ENCODE measurements at regions of chr1 and their contacts with region 1.

Region 1: GRCh38 chr1:10667861-10668761 is 128.3 kb downstream of the CASZ1 start:
- DNase-seq: peak; percentile 56
- ATAC-seq: peak; percentile 79
- H3K4me3 ChIP-seq: peak overlapping the region in 2 of 3 experiments; percentile 42 to 48; a peak in 3 of 6 replicates
- H3K27ac ChIP-seq: no peak overlapping the region
- H3K4me1 ChIP-seq: peaks cover 21% of the 10 kb centered on the region
- H3K27me3 ChIP-seq: no peaks in the 10 kb centered on the region
- CTCF ChIP-seq: no peak; the same call in none of the 2 replicates
- EP300 ChIP-seq: no peak
- POLR2A ChIP-seq: no peak
- RAD21 ChIP-seq: no peak; the same call in 1 of the 2 replicates

Region 2: DNA sequence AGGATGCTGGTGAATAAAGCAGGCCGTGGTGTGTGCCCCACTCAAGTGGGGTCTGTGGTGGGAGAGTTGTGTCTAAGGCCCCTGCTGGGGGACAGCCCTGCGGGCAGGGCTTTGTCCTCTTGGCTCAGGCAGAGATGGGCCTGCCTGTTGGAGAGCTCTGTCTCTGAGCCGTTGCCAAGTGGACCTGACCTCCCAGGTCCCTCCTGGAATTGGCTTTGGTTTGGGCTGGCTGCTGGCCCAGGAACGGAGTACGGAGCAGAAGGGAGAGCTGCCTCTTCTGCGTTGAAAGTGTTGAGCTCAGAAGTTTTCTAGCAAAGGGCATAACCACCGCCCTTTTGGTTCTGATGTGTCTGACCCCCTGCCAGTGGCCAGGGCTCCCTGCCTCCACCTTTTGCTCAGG is 39.4 kb before region 1 on chr1:
- CTCF ChIA-PET with region 1: no interaction called
- POLR2A ChIA-PET with region 1: no interaction called
- in situ Hi-C with region 1: no loop called
- intact Hi-C with region 1: no loop called
- DNase-seq: no peak
- ATAC-seq: no peak
- H3K4me3 ChIP-seq: no peak overlapping the region
- H3K27ac ChIP-seq: no peak overlapping the region
- H3K4me1 ChIP-seq: peaks cover 10% of the 10 kb centered on the region
- H3K27me3 ChIP-seq: no peaks in the 10 kb centered on the region
- CTCF ChIP-seq: no peak
- EP300 ChIP-seq: no peak
- POLR2A ChIP-seq: no peak
- RAD21 ChIP-seq: no peak

Region 3: GRCh38 chr1:10651389-10651766 is 16.7 kb before region 1 on chr1:
- CTCF ChIA-PET with region 1: no interaction called
- POLR2A ChIA-PET with region 1: no interaction called
- in situ Hi-C with region 1: no loop called
- intact Hi-C with region 1: no loop called
- DNase-seq: peak; percentile 15
- ATAC-seq: peak; percentile 43
- H3K4me3 ChIP-seq: no peak overlapping the region
- H3K27ac ChIP-seq: no peak overlapping the region
- H3K4me1 ChIP-seq: no peaks in the 10 kb centered on the region
- H3K27me3 ChIP-seq: no peaks in the 10 kb centered on the region
- CTCF ChIP-seq: no peak
- EP300 ChIP-seq: no peak
- POLR2A ChIP-seq: no peak
- RAD21 ChIP-seq: no peak

Region 4: DNA sequence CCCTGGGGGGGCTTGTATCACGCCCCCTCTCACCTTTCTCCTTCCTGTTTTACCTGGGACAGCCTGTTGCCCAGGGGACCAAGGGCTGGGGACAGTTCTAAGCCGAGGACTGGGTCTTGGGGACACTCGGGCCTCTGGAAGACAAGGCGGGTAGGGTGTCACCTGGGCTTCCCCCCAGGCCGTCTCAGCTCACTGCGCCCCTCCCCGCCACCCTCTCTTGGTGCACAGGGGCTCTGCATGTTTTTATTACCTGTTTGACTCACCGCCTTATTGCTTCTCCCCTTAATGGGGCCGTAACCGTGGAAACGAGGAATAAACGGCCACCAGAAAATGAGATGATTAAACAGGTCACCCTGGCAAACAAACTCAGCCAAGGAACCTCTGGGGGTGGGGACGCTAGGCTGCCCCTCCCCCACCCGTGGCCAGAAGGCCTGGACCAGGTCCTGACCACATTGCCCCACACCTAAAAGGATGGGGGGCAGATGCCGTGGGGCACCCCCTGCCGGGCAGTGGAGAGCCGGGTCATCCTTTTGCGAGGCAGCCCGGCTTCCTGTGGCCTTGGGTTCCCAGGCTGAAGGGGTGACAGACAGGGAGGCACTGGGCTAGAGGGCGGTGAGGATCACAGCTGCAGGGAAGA is 18.4 kb after region 1 on chr1:
- CTCF ChIA-PET with region 1: no interaction called
- POLR2A ChIA-PET with region 1: interaction called, 12 read pairs
- in situ Hi-C with region 1: no loop called
- intact Hi-C with region 1: no loop called
- DNase-seq: peak; percentile 71
- ATAC-seq: peak; percentile 74
- H3K4me3 ChIP-seq: peak overlapping the region; percentile 35 to 61 (median 39); a peak in 5 of 6 replicates
- H3K27ac ChIP-seq: peak overlapping the region; percentile 90
- H3K4me1 ChIP-seq: peaks cover 77% of the 10 kb centered on the region
- H3K27me3 ChIP-seq: no peaks in the 10 kb centered on the region; a peak in 1 of 5 replicates
- CTCF ChIP-seq: peak; percentile 83
- EP300 ChIP-seq: peak in 1 of 2 experiments; percentile 19; a peak in 1 of 4 replicates
- POLR2A ChIP-seq: no peak
- RAD21 ChIP-seq: peak; percentile 42; the same call in 1 of the 2 replicates